CD4-positive, alpha-beta memory T cell (primary cell): ENCODE measurements at regions of chr4 and their contacts with region 1.

Region 1: GRCh38 chr4:89906777-89907521 is 12.3 kb downstream of the MMRN1 start:
- DNase-seq: no peak
- H3K4me3 ChIP-seq: no peak overlapping the region
- H3K4me3 Mint-ChIP-seq: no peak overlapping the region
- H3K27ac ChIP-seq: no peak overlapping the region
- H3K27ac Mint-ChIP-seq: no peak overlapping the region
- H3K4me1 ChIP-seq: no peaks in the 10 kb centered on the region
- H3K4me1 Mint-ChIP-seq: peaks cover 0 to under 1% (median 0%) of the 10 kb centered on the region in 4 donors
- H3K27me3 ChIP-seq: no peaks in the 10 kb centered on the region
- H3K27me3 Mint-ChIP-seq: no peaks in the 10 kb centered on the region

Region 2: GRCh38 chr4:89242864-89243732 is 663.9 kb before region 1 on chr4:
- CTCF ChIA-PET with region 1: no interaction called
- POLR2A ChIA-PET with region 1: no interaction called
- intact Hi-C with region 1: loop called (anchors 5 kb)
- DNase-seq: peak; percentile 55 to 81 (median 70)
- H3K4me3 ChIP-seq: no peak overlapping the region
- H3K4me3 Mint-ChIP-seq: peak overlapping the region in 6 of 8 donors; percentile 7 to 51 (median 18)
- H3K27ac ChIP-seq: peak overlapping the region; percentile 68
- H3K27ac Mint-ChIP-seq: peak overlapping the region; percentile 78 to 98 (median 93)
- H3K4me1 ChIP-seq: peaks cover 60% of the 10 kb centered on the region
- H3K4me1 Mint-ChIP-seq: peaks cover 46 to 74% (median 59%) of the 10 kb centered on the region in 4 donors
- H3K27me3 ChIP-seq: no peaks in the 10 kb centered on the region
- H3K27me3 Mint-ChIP-seq: no peaks in the 10 kb centered on the region

Region 3: DNA sequence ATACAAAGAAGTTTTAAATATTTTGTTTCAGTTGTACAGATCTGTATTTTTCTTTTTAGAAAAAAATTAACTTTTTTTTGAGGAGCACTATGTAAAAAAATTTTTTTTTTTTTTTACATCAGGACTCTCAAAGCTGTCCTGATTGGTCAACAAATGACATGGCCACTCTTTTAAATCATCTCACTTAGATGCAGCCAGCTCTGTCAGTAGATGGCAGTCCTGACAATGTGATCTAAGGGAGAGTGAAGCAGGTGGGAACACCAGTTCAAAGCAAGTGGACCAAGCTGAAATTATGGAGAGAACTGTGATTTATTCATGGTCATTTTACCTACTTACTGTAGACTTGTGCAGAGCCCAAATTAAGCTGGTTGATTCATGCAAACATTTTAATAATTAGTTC is 424.7 kb before region 1 on chr4:
- CTCF ChIA-PET with region 1: interaction called, 3 read pairs
- POLR2A ChIA-PET with region 1: no interaction called
- intact Hi-C with region 1: loop called (anchors 5 kb)
- DNase-seq: no peak
- H3K4me3 ChIP-seq: no peak overlapping the region
- H3K4me3 Mint-ChIP-seq: no peak overlapping the region
- H3K27ac ChIP-seq: no peak overlapping the region
- H3K27ac Mint-ChIP-seq: no peak overlapping the region
- H3K4me1 ChIP-seq: no peaks in the 10 kb centered on the region
- H3K4me1 Mint-ChIP-seq: no peaks in the 10 kb centered on the region
- H3K27me3 ChIP-seq: no peaks in the 10 kb centered on the region
- H3K27me3 Mint-ChIP-seq: no peaks in the 10 kb centered on the region

Region 4: GRCh38 chr4:89836897-89837384 is 70.0 kb before region 1 on chr4 and contains the start of gene SNCA:
- CTCF ChIA-PET with region 1: no interaction called
- POLR2A ChIA-PET with region 1: no interaction called
- intact Hi-C with region 1: loop called (anchors 5 kb)
- DNase-seq: peak in 3 of 5 donors; percentile 27 to 55 (median 31)
- H3K4me3 ChIP-seq: peak within 1 kb of the TSS; percentile 6 to 58
- H3K4me3 Mint-ChIP-seq: peak within 1 kb of the TSS; percentile 73 to 89 (median 82)
- H3K27ac ChIP-seq: no peak within 1 kb of the TSS
- H3K27ac Mint-ChIP-seq: peak within 1 kb of the TSS in 3 of 7 donors; percentile 30 to 77 (median 35)
- H3K4me1 ChIP-seq: peaks cover 22% of the 10 kb centered on the region
- H3K4me1 Mint-ChIP-seq: peaks cover 14 to 29% (median 20%) of the 10 kb centered on the region in 4 donors
- H3K27me3 ChIP-seq: peaks cover 22% of the 10 kb centered on the region
- H3K27me3 Mint-ChIP-seq: peaks cover 30 to 40% of the 10 kb centered on the region in 2 donors
- total RNA-seq, gene SNCA: 1.4 TPM

Region 5: DNA sequence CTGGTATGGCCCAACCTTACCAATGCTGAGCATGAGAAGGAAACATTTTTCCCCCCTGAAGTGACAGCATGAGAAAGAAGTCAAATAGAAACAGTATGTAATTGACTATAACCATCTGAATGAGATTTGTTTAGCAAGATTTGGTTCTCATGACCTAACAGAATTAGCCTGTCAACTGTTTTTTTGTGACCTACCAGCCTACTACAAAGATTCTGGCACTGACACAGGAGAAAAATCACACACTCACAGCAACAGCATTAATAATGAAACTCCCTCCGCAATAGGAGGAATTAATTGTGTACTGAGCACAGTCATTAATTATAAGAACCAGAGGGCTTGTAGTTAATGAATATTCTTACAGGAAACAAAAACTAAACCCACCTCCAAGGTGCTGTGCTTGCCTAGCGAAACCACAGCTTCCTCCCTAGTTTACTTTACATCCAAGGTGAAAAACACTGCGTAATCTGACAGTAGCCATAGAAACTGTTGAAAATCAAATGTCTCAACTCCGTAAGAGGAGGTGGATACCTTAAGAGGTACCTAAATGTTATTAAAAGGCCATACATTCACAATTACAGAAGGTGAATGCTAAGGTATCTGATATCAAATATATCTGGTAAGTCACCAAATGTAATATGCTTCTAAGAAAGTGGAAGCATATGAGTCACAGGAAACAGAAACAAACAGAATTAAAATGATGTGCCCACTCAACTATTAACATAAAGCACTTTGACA is 22.6 kb after region 1 on chr4:
- CTCF ChIA-PET with region 1: interaction called, 5 read pairs
- POLR2A ChIA-PET with region 1: no interaction called
- intact Hi-C with region 1: loop called (anchors 1 kb)
- DNase-seq: peak; percentile 50 to 77 (median 72)
- H3K4me3 ChIP-seq: peak overlapping the region in 1 of 2 donors; percentile 9
- H3K4me3 Mint-ChIP-seq: peak overlapping the region; percentile 52 to 89 (median 78)
- H3K27ac ChIP-seq: peak overlapping the region; percentile 34
- H3K27ac Mint-ChIP-seq: peak overlapping the region; percentile 75 to 97 (median 95)
- H3K4me1 ChIP-seq: peaks cover 21% of the 10 kb centered on the region
- H3K4me1 Mint-ChIP-seq: peaks cover 11 to 19% (median 17%) of the 10 kb centered on the region in 4 donors
- H3K27me3 ChIP-seq: no peaks in the 10 kb centered on the region
- H3K27me3 Mint-ChIP-seq: no peaks in the 10 kb centered on the region